ENCODE measurements at regions of chr2 and their contacts with region 1.

Region 1: GRCh38 chr2:100381240-100381639 is 36.2 kb downstream of the CHST10 start:
- ATAC-seq: peak in 7 of 8 experiments; percentile 39 to 80 (median 68)
- H3K4me3 ChIP-seq: no peak overlapping the region
- H3K27ac ChIP-seq: no peak overlapping the region
- H3K4me1 ChIP-seq: peaks cover 4 to 6% of the 10 kb centered on the region in 2 donors

Region 2: DNA sequence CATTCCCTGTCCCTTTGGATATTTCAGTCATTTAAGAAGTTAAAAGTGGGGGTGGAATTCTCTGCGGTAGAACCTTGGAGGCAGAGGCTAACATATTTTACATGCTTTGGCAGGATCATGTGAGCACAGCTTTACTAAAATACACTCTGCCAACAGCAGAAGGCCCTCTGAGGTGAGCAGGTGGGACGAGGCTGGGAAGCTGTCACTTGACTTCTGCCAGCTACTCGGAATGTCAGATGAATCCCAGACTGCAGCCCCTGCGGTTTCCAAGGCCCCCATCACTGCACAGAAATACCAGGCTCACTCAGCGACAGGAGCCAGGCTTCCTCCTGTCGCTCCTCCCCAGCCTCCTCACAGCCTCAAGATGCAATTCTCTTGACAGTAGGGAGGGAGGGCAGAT is 670.5 kb before region 1 on chr2:
- in situ Hi-C with region 1: loop called in 1 of 9 experiments (anchors 25 kb)
- ATAC-seq: peak in 2 of 8 experiments; percentile 27 to 56
- H3K4me3 ChIP-seq: no peak overlapping the region
- H3K27ac ChIP-seq: no peak overlapping the region
- H3K4me1 ChIP-seq: peaks cover 0 to 14% of the 10 kb centered on the region in 2 donors

Region 3: GRCh38 chr2:100262555-100263320 is 118.5 kb before region 1 on chr2:
- in situ Hi-C with region 1: loop called in 5 of 9 experiments (anchors 5 to 25 kb)
- ATAC-seq: peak; percentile 42 to 86 (median 64)
- H3K4me3 ChIP-seq: peak overlapping the region in 1 of 5 donors; percentile 4
- H3K27ac ChIP-seq: no peak overlapping the region
- H3K4me1 ChIP-seq: peaks cover 2 to 6% of the 10 kb centered on the region in 2 donors

Region 4: GRCh38 chr2:100279586-100280534 is 101.4 kb before region 1 on chr2:
- in situ Hi-C with region 1: no loop called
- ATAC-seq: no peak
- H3K4me3 ChIP-seq: no peak overlapping the region
- H3K27ac ChIP-seq: no peak overlapping the region
- H3K4me1 ChIP-seq: peaks cover 20 to 23% of the 10 kb centered on the region in 2 donors